CD4-positive, alpha-beta T cell (primary cell): ENCODE measurements at regions of chr11 and their contacts with region 1.

Region 1: DNA sequence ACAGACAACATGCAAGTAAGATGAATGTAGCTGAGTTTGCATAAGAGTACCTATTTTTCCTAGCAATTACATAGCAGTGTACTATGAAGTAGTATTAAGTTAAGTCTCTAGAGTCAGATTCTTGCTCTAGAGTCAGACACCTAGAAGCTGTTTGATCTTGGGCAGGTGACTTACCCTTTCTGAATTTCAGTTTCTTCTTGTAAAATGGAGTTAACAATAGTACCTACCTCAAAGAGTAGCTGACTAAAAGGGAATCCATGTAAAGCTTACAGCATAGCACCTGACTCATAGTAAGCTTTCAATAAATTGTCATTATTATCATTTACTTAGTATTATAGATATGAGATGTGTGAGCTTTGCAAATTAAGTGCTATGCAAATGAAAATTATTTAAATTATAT is 47.8 kb upstream of the PTPRJ start:
- DNase-seq: no peak
- ATAC-seq: no peak
- H3K4me3 ChIP-seq: no peak overlapping the region
- H3K4me3 Mint-ChIP-seq: no peak overlapping the region
- H3K27ac ChIP-seq: no peak overlapping the region
- H3K27ac Mint-ChIP-seq: no peak overlapping the region
- H3K4me1 ChIP-seq: peaks cover 12% of the 10 kb centered on the region
- H3K4me1 Mint-ChIP-seq: peaks cover 23% of the 10 kb centered on the region
- H3K27me3 ChIP-seq: no peaks in the 10 kb centered on the region
- H3K27me3 Mint-ChIP-seq: no peaks in the 10 kb centered on the region
- CTCF ChIP-seq: no peak

Region 2: DNA sequence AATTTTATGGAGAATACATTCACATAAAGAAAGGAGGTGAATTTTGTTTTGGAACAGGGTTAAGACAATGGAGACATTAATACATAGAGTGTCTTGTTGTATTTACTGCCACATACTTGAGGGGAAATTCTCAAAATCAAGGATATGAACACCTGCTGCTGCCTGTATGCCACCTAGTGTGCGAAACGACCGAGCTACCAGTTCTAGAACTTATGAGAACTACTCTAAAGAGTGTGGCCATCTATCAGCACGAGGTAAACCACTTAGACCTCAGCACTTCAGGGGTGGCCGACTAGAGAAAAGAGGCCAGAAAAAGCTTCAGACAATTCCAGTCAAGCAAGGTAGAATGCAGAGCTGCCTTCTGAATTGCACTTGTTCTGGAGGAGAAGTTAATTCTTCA is 215.9 kb before region 1 on chr11:
- CTCF ChIA-PET with region 1: no interaction called
- POLR2A ChIA-PET with region 1: no interaction called
- intact Hi-C with region 1: no loop called
- DNase-seq: peak in 2 of 14 experiments; percentile 20 to 35
- ATAC-seq: no peak
- H3K4me3 ChIP-seq: no peak overlapping the region
- H3K4me3 Mint-ChIP-seq: peak overlapping the region; percentile 35
- H3K27ac ChIP-seq: no peak overlapping the region
- H3K27ac Mint-ChIP-seq: peak overlapping the region; percentile 49
- H3K4me1 ChIP-seq: peaks cover 13% of the 10 kb centered on the region
- H3K4me1 Mint-ChIP-seq: peaks cover 19% of the 10 kb centered on the region
- H3K27me3 ChIP-seq: no peaks in the 10 kb centered on the region
- H3K27me3 Mint-ChIP-seq: no peaks in the 10 kb centered on the region
- CTCF ChIP-seq: no peak

Region 3: GRCh38 chr11:48103621-48104562 is 171.3 kb after region 1 on chr11:
- CTCF ChIA-PET with region 1: interaction called, 102 read pairs
- POLR2A ChIA-PET with region 1: interaction called, 21 read pairs
- intact Hi-C with region 1: no loop called
- DNase-seq: no peak
- ATAC-seq: no peak
- H3K4me3 ChIP-seq: no peak overlapping the region
- H3K4me3 Mint-ChIP-seq: no peak overlapping the region
- H3K27ac ChIP-seq: no peak overlapping the region
- H3K27ac Mint-ChIP-seq: peak overlapping the region; percentile 59
- H3K4me1 ChIP-seq: peaks cover 51% of the 10 kb centered on the region
- H3K4me1 Mint-ChIP-seq: peaks cover 71% of the 10 kb centered on the region
- H3K27me3 ChIP-seq: no peaks in the 10 kb centered on the region
- H3K27me3 Mint-ChIP-seq: no peaks in the 10 kb centered on the region
- CTCF ChIP-seq: no peak

Region 4: DNA sequence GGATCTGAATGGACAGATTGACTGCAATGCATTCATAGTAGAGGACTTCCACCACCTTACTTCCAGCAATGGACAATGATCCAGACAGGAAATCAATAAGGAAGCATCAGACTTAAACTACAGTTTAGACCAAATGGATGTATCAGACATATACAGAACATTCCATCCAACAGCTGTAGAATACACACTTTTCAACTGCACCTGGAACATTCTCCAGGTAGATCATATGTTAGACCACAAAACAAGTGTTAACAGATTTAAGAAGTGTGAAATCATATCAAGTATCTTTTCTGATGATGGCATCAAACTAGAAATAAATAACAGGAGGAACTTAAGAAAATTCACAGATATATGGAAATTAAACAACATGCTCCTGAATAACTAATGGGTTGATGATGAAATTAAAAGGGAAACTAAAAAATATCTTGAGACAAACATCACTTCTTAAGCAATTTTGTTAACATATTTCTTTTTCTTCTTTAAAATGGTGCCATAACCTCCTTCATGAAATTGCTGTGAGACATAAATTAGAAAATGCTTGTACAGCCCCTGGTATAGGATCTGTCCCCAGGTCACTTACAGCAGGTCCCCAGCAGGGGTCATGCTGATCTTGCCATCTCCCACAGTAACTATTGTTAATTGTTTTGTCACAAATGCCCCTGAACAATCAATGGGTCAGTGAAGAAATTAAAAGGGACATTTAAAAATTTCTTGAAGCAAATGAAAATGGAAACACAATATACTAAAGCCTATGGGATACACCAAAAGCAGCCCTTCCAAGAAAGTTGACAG is 184.1 kb after region 1 on chr11:
- CTCF ChIA-PET with region 1: interaction called, 18 read pairs
- POLR2A ChIA-PET with region 1: interaction called, 5 read pairs
- intact Hi-C with region 1: no loop called
- DNase-seq: peak in 1 of 14 experiments; percentile 21
- ATAC-seq: peak; percentile 61
- H3K4me3 ChIP-seq: no peak overlapping the region
- H3K4me3 Mint-ChIP-seq: no peak overlapping the region
- H3K27ac ChIP-seq: no peak overlapping the region
- H3K27ac Mint-ChIP-seq: no peak overlapping the region
- H3K4me1 ChIP-seq: no peaks in the 10 kb centered on the region
- H3K4me1 Mint-ChIP-seq: no peaks in the 10 kb centered on the region
- H3K27me3 ChIP-seq: no peaks in the 10 kb centered on the region
- H3K27me3 Mint-ChIP-seq: no peaks in the 10 kb centered on the region
- CTCF ChIP-seq: peak; percentile 36